ENCODE measurements at regions of chr4 and their contacts with region 1.

Region 1: DNA sequence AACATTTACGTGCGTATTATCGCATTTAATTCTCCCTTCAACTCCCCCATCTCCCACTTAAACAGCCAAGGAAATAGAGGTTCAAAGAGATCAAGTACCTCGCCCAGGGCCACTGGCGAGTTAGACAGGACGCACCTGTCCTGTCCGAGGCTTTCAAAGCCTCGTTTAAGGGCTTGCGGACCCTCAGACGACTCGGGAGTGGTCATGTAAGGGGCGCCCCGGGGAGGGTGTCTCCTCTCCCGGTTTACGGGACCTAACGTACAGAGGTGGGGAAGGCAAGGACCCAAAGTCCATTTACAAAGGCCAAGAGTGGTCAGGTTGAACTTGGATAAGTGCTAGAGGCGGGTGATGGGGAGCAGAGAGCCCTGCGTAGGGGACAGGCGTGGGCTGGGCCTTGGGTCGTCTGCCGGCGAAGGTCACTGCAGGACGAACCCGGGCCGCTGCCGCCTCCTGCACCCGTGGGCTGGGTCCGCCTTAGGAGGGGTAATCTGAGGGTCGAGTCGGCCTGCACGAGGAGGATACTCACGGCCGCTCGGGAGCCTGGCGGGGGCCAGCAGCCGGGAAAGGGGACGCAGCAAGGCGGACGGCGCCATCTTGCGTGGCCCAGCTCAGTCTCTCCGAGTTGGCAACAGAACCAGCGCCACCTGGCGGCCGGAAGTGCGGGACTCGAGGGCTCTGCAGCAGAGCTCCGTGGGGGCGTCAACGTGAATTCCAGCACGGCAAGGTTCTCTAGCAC is 5.9 kb upstream of the NAA15 start:
- DNase-seq: peak; percentile 97
- H3K4me3 ChIP-seq: peak overlapping the region; percentile 71 to 92
- H3K27ac ChIP-seq: peak overlapping the region; percentile 87 to 91
- H3K4me1 ChIP-seq: peaks cover 6% of the 10 kb centered on the region
- H3K27me3 ChIP-seq: no peaks in the 10 kb centered on the region
- CTCF ChIP-seq: peak; percentile 94 to 98 (median 96)
- POLR2A ChIP-seq: peak; percentile 42

Region 2: GRCh38 chr4:139030614-139031235 is 264.6 kb before region 1 on chr4:
- intact Hi-C with region 1: loop called (anchors 5 kb)
- DNase-seq: peak; percentile 82
- H3K4me3 ChIP-seq: no peak overlapping the region
- H3K27ac ChIP-seq: no peak overlapping the region
- H3K4me1 ChIP-seq: no peaks in the 10 kb centered on the region
- H3K27me3 ChIP-seq: no peaks in the 10 kb centered on the region
- CTCF ChIP-seq: peak; percentile 62 to 88 (median 84)
- POLR2A ChIP-seq: no peak

Region 3: DNA sequence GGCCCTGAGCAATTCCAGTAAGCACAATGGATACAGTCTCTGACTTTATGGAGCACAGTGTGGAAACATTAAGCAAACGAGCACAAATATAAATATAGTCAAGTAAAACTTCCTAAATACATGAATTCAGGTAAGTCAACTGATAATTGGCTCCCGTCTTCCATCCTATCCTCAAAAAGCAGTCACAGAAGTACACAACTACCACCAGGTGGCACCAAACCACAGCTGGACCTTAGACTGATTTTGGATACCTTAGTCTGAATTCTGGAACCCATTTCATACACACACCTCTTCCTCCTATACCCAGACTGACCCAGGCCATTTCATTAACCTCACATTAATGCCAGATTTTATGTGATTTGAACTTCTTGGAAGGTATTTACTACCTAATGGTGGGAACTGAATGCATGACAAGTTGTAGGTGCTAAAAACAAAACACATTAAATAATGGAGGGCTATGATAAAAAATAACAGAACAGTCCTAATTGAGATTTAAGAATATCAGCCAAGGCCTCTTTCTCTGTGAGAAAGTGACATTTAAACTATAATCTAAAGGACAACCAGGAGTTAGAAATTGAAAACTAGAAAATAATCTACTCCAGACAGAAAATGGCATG is 195.9 kb before region 1 on chr4:
- intact Hi-C with region 1: loop called (anchors 1 kb)
- DNase-seq: peak; percentile 74
- H3K4me3 ChIP-seq: no peak overlapping the region
- H3K27ac ChIP-seq: no peak overlapping the region
- H3K4me1 ChIP-seq: no peaks in the 10 kb centered on the region
- H3K27me3 ChIP-seq: no peaks in the 10 kb centered on the region
- CTCF ChIP-seq: peak; percentile 60 to 84 (median 79)
- POLR2A ChIP-seq: no peak

Region 4: DNA sequence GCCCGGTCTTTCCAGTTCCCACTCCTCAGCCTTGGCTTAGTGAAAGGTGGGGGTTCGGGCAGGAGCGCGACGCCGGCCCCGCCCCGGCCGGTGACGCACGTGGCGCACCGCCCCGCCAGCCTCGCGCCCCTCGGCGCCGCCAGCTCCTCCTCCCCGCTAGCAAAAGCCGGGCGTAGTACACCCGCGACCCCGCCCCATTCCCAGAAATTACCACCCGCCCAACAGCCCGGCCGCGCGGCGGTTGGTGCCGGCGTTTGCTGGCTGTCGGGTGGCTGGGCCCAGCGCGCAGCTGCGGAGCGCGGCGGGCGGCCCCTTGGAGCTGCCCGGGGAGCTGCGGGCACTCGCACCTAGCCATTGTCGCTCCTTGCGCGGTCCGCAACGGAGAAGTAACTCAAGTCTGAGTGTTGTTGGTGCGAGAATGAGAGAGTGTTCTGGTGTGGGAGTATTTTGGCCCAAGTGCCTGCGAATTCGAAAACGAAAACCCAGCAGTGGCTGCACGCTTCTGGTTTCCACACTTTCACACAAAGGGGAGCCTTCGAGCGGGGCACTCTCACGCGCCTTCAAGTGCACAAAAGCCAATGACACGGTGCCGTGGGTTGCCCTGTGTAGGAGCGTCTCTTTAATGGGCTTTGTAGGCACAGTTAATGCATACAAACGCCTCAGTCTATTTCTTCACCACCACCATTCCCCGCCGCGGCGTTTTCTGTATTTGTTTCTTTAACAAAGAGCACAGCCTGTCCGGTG is 117.3 kb before region 1 on chr4:
- intact Hi-C with region 1: loop called (anchors 2 kb)
- DNase-seq: peak; percentile 95
- H3K4me3 ChIP-seq: peak overlapping the region; percentile 97
- H3K27ac ChIP-seq: peak overlapping the region; percentile 100
- H3K4me1 ChIP-seq: no peaks in the 10 kb centered on the region
- H3K27me3 ChIP-seq: no peaks in the 10 kb centered on the region
- CTCF ChIP-seq: peak in 2 of 4 experiments; percentile 6 to 20
- POLR2A ChIP-seq: peak; percentile 93

Region 5: DNA sequence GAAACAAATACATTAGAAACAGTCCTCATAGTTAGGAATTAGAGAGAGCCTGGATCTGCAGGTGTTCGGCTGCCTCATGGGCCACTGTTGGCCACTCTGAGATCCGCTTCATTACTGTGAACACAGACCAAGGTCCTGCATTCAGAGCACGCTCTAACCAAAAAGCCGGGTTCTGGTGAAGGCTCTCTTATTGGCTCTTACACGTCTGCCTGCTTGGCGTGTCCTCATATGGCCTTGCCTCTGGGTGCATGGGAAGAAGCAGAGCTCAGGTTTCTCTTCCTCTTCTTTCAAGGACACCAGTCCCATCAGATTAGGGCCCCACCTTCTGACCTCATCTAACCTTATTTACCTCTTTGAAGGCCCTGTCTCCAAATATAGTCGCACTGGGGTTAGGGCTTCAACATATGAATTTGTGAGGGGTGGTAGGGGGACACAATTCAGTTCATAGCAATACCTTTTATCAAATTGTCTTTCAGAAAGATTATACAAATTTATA is 81.3 kb before region 1 on chr4:
- intact Hi-C with region 1: no loop called
- DNase-seq: peak; percentile 41
- H3K4me3 ChIP-seq: no peak overlapping the region
- H3K27ac ChIP-seq: no peak overlapping the region
- H3K4me1 ChIP-seq: no peaks in the 10 kb centered on the region
- H3K27me3 ChIP-seq: no peaks in the 10 kb centered on the region
- CTCF ChIP-seq: no peak
- POLR2A ChIP-seq: no peak

Region 6: GRCh38 chr4:139229534-139230039 is 65.8 kb before region 1 on chr4:
- intact Hi-C with region 1: loop called (anchors 2 kb)
- DNase-seq: peak; percentile 34
- H3K4me3 ChIP-seq: no peak overlapping the region
- H3K27ac ChIP-seq: no peak overlapping the region
- H3K4me1 ChIP-seq: no peaks in the 10 kb centered on the region
- H3K27me3 ChIP-seq: no peaks in the 10 kb centered on the region
- CTCF ChIP-seq: peak; percentile 43 to 83 (median 74)
- POLR2A ChIP-seq: no peak

Region 7: GRCh38 chr4:139315221-139315675 is 19.9 kb after region 1 on chr4:
- intact Hi-C with region 1: no loop called
- DNase-seq: no peak
- H3K4me3 ChIP-seq: no peak overlapping the region
- H3K27ac ChIP-seq: no peak overlapping the region
- H3K4me1 ChIP-seq: no peaks in the 10 kb centered on the region
- H3K27me3 ChIP-seq: no peaks in the 10 kb centered on the region
- CTCF ChIP-seq: no peak
- POLR2A ChIP-seq: no peak

Region 8: GRCh38 chr4:139441029-139441428 is 145.7 kb after region 1 on chr4:
- intact Hi-C with region 1: no loop called
- DNase-seq: no peak
- H3K4me3 ChIP-seq: no peak overlapping the region
- H3K27ac ChIP-seq: no peak overlapping the region
- H3K4me1 ChIP-seq: no peaks in the 10 kb centered on the region
- H3K27me3 ChIP-seq: no peaks in the 10 kb centered on the region
- CTCF ChIP-seq: no peak
- POLR2A ChIP-seq: no peak

Measured in prostate gland (tissue), 2 donors.